Heart left ventricle (tissue), 16 donors: ENCODE measurements at regions of chr18 and their contacts with region 1.

Region 1: GRCh38 chr18:38350141-38350540 is 784.5 kb upstream of the CELF4 start:
- DNase-seq: no peak
- ATAC-seq: no peak
- H3K4me3 ChIP-seq: no peak overlapping the region
- H3K27ac ChIP-seq: no peak overlapping the region
- H3K4me1 ChIP-seq: no peaks in the 10 kb centered on the region
- H3K27me3 ChIP-seq: no peaks in the 10 kb centered on the region
- CTCF ChIP-seq: no peak
- POLR2A ChIP-seq: no peak

Region 2: GRCh38 chr18:38402509-38402908 is 52.4 kb after region 1 on chr18:
- intact Hi-C with region 1: loop called in 1 of 10 experiments (anchors 10 kb)
- DNase-seq: no peak
- ATAC-seq: no peak
- H3K4me3 ChIP-seq: no peak overlapping the region
- H3K27ac ChIP-seq: no peak overlapping the region
- H3K4me1 ChIP-seq: no peaks in the 10 kb centered on the region
- H3K27me3 ChIP-seq: no peaks in the 10 kb centered on the region
- CTCF ChIP-seq: no peak
- POLR2A ChIP-seq: no peak